ENCODE measurements at regions of chr11 and their contacts with region 1.

Region 1: DNA sequence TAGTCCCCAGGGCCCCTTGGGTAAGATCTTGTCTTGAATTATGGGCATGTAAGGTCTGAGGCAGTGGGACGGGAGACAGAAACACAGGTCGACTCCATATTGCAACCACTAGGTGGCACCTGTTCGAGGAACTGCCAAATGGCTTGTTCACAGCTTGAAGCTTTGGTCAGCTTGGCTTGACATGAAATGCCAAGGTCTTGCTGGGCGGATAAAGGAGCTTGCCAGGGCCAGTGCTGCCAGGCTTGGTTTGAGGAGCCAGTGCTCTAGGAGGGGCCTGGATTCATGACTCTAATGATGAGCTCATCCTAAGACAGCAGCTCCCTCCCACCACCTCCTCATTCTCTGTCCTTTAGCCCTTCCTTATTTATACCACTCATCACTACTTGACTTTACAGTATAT is 11.9 kb upstream of the NRIP3 start:
- DNase-seq: peak in 5 of 6 donors; percentile 60 to 82 (median 70)
- ATAC-seq: peak; percentile 89 to 98 (median 96)
- H3K4me3 ChIP-seq: no peak overlapping the region
- H3K27ac ChIP-seq: no peak overlapping the region
- H3K4me1 ChIP-seq: no peaks in the 10 kb centered on the region
- H3K27me3 ChIP-seq: no peaks in the 10 kb centered on the region
- CTCF ChIP-seq: peak; percentile 59 to 81 (median 74)

Region 2: DNA sequence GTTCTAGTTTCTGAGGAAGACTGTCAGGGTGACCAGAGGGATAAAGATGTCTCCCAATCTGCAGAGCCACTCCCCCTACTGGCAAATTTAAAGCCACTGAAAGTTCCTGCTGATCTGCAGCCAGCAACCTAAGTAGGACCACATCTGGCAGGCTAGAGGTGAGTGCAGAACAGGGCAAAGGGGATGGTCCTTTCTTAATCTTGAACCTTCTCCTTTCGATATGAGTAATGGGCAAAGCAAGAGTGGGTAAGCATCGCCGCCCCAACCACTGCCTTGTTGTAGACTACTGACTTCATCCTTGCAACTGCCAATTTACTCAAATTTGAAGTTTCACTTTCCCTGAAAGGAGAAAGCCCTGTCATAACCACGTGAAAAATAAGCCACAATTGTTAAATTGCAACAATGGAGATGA is 45.0 kb after region 1 on chr11:
- intact Hi-C with region 1: no loop called
- DNase-seq: no peak
- ATAC-seq: peak in 1 of 4 donors; percentile 48
- H3K4me3 ChIP-seq: no peak overlapping the region
- H3K27ac ChIP-seq: no peak overlapping the region
- H3K4me1 ChIP-seq: peaks cover 0 to 4% (median 0%) of the 10 kb centered on the region in 3 donors
- H3K27me3 ChIP-seq: no peaks in the 10 kb centered on the region
- CTCF ChIP-seq: no peak

Region 3: DNA sequence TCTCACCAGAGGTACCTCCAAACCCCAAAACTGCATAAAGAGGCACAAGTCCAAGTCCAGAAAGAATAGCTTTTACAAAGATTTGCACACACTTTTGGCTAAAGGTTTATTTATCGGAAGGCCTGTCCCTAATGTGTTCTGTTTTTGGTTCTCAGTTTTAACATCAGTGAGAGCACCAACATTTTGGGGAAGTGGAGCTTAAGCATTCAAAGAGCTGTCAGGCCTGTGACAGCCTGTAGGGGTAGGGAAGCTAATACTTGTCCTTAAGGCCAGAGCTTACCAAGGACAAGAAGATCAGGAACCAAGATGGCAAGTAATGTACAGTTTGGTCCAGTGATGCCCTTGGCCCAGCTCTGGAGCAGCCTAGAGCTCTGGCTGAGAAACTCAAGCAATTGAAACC is 114.6 kb after region 1 on chr11:
- intact Hi-C with region 1: loop called in 2 of 3 experiments (anchors 5 kb)
- DNase-seq: no peak
- ATAC-seq: no peak
- H3K4me3 ChIP-seq: no peak overlapping the region
- H3K27ac ChIP-seq: no peak overlapping the region
- H3K4me1 ChIP-seq: no peaks in the 10 kb centered on the region
- H3K27me3 ChIP-seq: no peaks in the 10 kb centered on the region
- CTCF ChIP-seq: no peak

Region 4: DNA sequence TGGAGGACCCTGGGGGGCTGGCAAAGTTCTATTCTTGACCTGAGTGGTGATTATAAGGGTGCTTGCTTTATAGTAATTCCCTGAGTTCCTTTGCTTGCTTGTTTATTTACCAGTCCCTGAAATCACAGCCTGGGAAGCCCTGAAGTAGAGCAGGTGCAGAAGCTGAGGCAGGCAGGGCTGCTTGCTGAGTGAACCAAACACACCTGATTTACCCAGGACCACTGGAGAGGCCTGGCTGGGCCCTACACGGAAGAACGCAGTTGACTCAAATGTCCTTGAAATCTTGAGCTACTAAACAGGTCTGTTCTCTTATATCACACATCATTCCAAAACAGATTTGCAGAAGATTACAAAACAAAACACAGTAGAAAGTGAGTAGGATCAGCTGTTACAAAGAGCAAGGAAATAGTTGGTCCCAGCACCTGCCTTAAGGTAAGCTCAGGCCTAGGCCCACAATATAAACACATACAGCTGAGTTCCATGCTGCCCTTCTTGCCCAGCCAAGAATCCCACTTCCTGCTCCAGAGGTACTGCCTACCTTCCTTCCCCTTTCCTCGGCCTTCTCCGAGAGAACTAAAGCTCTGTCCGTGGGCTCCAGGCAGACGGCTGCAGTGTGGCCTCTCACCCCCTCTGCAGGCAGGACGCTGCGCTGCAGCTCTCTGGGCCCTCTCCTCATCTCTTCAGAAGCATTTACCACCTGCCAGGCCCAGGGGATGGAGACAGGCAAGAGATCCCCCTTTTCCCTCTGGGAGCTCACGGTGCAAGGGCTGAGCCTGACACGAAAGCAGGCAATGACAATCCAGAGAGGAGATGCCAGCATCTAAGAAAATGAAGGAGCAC is 121.8 kb after region 1 on chr11:
- intact Hi-C with region 1: loop called in 2 of 3 experiments (anchors 5 kb)
- DNase-seq: peak; percentile 72 to 90 (median 82)
- ATAC-seq: peak; percentile 87 to 96 (median 95)
- H3K4me3 ChIP-seq: no peak overlapping the region
- H3K27ac ChIP-seq: peak overlapping the region; percentile 48 to 89 (median 73)
- H3K4me1 ChIP-seq: peaks cover 32 to 46% (median 41%) of the 10 kb centered on the region in 3 donors
- H3K27me3 ChIP-seq: no peaks in the 10 kb centered on the region
- CTCF ChIP-seq: peak; percentile 76 to 90 (median 84)

Region 5: DNA sequence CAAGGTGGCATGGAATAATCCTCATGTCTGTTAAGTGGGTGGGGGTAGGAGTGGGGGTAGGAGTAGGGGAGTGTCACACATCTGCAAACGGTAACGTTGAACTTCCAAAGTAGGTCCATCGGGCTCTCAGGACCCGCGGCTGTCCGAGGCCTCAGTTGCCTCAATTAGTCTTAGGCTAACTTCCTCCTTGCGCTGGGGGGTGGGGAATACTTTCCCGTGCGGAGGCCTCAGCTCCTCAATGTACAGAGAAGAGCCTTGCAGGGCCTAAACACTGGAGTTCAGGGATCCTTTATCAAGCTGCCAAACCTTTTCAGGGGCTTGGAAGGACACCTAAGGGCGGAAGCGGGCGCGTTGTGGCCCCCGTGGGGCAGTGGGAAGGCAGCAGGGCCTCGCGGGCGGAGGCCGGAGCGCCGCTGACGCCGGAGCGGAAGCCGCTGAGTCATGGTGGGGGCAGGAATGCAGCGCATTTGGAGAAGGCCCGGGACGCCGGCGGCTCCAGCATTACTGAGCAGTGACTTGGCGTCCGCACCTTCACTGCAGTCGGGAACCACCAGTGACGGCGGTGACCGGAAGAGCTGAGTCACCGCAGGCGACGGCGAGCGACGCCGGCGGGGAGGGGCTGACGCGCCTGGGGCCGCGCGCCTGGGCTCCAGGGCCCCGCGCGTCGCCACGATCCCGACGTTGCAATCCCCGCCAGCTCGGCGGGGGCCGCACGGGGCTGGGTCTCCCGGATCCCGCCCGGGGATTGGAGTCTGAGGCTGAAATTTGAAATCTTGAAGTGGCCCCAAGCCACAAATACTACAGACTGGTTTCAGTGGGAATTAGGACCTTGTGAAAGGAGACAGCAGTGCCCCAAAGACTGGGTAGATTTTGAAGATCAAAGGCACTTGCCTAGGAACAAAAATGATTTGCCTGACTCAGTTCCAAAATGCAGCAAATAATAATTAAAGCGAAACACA is 348.6 kb after region 1 on chr11:
- intact Hi-C with region 1: no loop called
- DNase-seq: peak; percentile 95 to 98 (median 96)
- ATAC-seq: peak; percentile 97 to 99 (median 98)
- H3K4me3 ChIP-seq: peak overlapping the region; percentile 11 to 51 (median 30)
- H3K27ac ChIP-seq: peak overlapping the region; percentile 96 to 99 (median 98)
- H3K4me1 ChIP-seq: no peaks in the 10 kb centered on the region
- H3K27me3 ChIP-seq: no peaks in the 10 kb centered on the region
- CTCF ChIP-seq: no peak